ENCODE measurements at regions of chr3 and their contacts with region 1.

Region 1: DNA sequence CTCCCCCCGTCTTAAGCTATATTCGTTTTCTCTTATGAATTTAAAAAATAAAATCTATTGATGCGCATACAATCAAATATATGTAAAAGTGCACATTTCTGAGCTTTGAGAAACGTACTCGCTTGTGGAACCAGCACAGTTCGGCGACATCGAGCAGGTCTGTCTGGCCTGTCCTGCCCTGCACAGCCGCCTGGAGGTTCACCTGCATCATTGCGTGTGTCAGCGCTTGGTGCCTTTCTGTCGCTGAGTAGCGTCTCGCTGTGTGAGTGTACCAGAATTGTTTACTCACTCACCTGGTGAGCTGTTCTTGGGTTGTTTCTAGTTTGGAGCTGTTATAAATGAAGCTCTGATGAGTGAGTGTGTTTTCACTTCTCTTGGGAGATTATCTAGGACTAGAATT is 104.0 kb downstream of the VGLL4 start:
- DNase-seq: no peak
- ATAC-seq: no peak
- H3K4me3 ChIP-seq: no peak overlapping the region
- H3K27ac ChIP-seq: no peak overlapping the region
- H3K4me1 ChIP-seq: peaks cover 25% of the 10 kb centered on the region
- H3K27me3 ChIP-seq: no peaks in the 10 kb centered on the region
- CTCF ChIP-seq: no peak
- EP300 ChIP-seq: no peak
- POLR2A ChIP-seq: no peak
- RAD21 ChIP-seq: no peak

Region 2: GRCh38 chr3:11379233-11379823 is 160.3 kb before region 1 on chr3:
- CTCF ChIA-PET with region 1: interaction called, 6 read pairs
- POLR2A ChIA-PET with region 1: no interaction called
- in situ Hi-C with region 1: loop called (anchors 5 kb)
- intact Hi-C with region 1: loop called (anchors 1 kb)
- DNase-seq: peak; percentile 24
- ATAC-seq: peak; percentile 59; the same call in 2 of the 3 replicates
- H3K4me3 ChIP-seq: no peak overlapping the region
- H3K27ac ChIP-seq: no peak overlapping the region
- H3K4me1 ChIP-seq: peaks cover 15% of the 10 kb centered on the region
- H3K27me3 ChIP-seq: no peaks in the 10 kb centered on the region
- CTCF ChIP-seq: peak; percentile 72
- EP300 ChIP-seq: no peak
- POLR2A ChIP-seq: no peak
- RAD21 ChIP-seq: peak; percentile 52; the same call in 1 of the 2 replicates

Measured in HepG2 (cell line).